ENCODE measurements at regions of chr3 and their contacts with region 1.

Region 1: DNA sequence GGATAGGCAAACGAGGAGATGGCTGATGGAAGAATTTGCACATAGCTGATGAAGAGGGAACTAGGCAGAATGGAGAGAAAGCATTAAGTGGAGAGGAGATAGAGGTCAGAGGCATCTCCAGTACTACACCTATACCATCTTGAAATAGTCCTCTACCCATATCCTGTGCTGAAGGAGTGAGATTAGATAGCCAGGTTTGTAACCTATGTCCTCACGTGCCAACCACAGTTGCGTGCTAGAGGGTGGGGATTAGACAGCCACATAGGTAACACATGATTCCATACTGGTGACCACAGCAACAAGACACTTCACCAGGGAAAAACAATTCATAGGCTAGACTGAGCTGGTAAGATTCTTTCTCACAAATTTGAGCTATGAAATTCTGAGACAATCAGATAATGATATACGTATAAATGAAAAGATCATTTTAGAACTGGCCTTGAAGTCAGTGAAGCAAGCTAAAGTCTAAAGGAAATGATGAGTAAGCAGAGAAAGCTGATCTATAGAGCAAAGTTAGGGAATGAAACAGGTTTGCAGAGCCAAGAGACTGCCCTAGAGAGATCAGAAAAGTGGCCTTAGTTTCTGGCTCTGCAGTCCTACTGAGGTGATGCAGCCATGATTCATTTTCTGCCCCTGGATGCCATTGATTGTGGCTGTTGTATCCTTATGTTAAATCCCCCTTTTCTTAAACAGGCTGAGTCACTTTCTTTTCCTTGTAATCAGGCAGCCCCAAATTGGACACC is 17.7 kb downstream of the MYNN start:
- DNase-seq: no peak
- ATAC-seq: no peak

Region 2: DNA sequence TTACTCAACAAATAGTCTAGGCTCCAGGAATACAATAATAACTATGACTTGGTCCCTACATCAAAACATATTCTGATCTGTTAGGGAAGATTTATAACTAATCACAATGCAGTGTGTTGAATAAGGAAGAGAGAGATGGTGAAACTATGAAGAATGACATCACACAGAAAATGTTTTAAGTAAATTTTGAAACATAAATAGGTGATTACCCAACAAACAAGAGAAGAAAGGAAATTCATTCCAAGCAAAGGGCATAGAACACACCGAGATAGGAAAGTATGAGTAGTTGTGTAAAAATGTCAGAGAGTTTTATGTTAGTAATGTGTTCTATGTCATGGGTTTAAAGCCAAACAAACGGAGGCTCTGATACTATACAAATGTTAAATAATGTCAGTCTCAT is 189.2 kb after region 1 on chr3:
- intact Hi-C with region 1: loop called (anchors 10 kb)
- DNase-seq: no peak
- ATAC-seq: no peak

Measured in Right ventricle myocardium superior (tissue), 1 donor.